Posterior vena cava (tissue), 2 donors: ENCODE measurements at regions of chr2 and their contacts with region 1.

Region 1: GRCh38 chr2:28137221-28137620 is 246.7 kb downstream of the BABAM2 start:
- DNase-seq: no peak

Region 2: DNA sequence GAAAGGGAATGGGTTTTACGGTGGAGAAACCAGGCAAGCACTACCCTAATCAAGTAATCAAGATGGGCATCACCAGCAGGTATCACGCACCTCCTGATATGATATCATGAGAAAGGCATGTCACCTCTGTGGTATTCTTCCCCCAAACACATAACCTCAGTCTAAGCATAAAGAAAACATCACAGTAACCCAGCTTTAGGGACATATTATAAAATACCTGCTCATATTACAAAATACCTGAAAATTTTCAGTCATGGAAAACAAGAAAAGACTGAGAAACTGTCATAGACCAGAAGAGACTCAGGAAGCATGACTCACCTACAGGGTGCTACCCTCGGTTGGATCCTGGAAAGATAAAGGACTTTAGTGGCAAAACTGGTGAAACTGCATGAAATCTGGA is 610.0 kb before region 1 on chr2:
- intact Hi-C with region 1: loop called in 1 of 2 experiments (anchors 5 kb)
- DNase-seq: no peak

Region 3: DNA sequence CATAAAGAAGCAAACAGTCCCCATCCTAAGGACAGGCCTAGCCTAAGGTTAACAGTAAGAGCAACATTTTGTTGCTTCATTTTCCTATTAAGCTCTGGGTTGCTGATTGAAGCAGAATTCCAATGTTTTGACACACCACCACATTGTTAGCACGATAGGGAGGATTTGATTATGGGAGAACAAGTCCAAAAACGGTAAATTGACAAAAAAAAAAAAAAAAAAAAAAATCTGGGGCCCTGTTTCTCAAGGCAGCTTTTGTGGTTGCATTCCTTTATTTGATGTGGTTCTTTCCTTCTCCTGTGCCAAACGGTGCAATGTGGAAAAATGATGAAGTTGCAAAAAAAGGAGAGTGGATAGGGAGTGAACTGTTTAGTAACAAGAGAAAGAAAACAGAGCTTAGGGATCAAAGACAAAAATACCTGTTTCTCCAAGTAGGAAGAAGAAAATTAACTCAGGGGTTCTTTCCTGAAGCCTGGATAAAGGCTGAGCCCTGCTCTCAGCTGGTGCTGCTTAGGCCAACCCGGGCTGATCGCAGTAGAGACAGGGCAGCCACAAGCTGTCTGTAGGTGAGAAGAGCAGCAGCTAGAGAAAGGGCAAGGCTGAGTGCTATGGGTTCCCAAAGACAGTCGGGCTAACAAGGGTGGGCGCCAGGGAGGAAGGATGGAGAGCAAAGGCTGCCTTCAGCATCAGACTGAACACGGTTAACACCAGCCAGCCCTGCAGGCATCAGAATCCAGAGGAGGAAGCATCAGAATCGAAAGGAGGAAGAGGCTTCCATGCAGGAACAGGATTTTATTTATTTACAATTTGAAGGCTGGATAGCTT is 87.6 kb after region 1 on chr2:
- intact Hi-C with region 1: no loop called
- DNase-seq: no peak